Vagina (tissue), 2 donors: ENCODE measurements at regions of chr12 and their contacts with region 1.

Region 1: DNA sequence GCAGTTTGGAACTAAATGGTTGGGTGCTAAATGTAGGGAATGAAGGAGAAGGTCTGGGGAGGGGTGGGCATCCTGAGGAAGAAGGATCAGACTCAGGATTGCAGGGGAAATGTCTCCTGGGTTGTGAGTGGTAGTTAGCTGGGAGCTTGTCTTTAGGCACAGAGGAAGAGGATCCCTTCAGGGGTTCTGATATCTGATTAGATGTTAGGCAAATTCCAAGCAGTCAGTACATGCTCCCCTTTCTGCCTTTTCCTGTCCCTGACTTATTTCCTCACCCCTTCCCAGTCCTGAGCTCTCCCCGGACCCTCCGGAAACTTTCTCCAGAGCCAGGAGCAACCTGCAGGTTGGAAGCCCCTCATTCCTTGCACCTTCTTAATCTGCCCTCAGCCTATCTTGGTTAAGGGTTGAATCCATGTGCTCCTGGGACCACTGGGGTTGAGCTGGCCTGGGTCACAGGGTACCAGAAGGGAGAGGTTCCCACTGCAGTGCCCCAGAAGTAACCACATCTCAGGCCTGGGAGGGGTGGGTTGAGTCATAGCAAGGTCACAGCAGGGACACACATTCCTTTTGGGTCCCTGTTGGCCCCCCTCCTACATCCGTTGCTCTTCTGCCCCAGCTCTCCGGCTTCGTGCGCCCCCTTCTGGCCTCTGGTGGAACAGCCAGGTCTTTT is 1.6 kb downstream of the IGFBP6 start:
- DNase-seq: peak in 1 of 2 donors; percentile 96
- H3K4me3 ChIP-seq: peak overlapping the region; percentile 58 to 70
- H3K27ac ChIP-seq: peak overlapping the region; percentile 84
- H3K4me1 ChIP-seq: peaks cover 46% of the 10 kb centered on the region
- H3K27me3 ChIP-seq: no peaks in the 10 kb centered on the region
- CTCF ChIP-seq: peak; percentile 91 to 99 (median 99)
- POLR2A ChIP-seq: peak in 1 of 2 donors; percentile 37

Region 2: DNA sequence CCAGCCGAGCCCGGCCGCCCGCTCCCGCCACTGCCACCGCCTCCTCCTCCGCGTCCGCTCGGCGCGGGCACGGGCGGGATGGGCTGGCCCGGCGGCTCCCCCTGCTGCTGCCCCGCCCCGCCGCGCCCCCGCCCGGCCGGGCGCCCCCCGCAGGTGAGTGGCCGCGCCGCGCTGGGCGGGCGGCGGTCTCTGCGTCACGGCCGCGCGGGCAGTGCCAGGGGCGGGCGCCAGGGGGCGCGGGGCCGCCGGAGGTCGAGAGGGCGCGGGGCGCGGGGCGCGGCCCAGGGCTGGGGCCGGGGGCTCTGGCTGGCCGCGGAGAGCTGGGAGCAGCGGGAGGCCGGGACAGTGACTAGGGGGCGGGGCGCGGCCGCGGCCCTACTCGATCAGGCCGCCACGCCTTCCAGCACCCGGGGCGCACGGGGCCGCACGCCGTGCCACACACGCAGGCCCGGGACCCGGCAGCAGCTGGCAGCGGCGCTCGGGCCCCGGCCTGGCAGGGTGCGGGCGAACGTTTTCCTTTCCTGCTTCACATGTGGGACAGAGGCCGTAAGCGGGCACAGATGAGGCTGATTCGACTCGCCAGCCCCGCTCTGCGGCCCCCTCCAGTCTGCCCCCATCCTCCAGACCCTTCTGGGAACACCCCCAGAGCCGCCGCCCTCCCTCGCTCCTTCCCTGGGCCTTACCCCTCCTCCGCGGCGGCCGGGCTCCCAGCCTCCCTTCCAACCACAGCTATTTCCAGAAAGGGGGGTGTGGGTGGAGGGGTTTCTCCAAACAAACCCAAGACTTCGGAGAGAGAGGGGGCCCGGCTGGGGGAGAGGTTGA is 51.7 kb before region 1 on chr12:
- intact Hi-C with region 1: loop called (anchors 10 kb)
- DNase-seq: peak in 1 of 2 donors; percentile 93
- H3K4me3 ChIP-seq: peak overlapping the region; percentile 73 to 86
- H3K27ac ChIP-seq: peak overlapping the region; percentile 96
- H3K4me1 ChIP-seq: peaks cover 72% of the 10 kb centered on the region
- H3K27me3 ChIP-seq: no peaks in the 10 kb centered on the region
- CTCF ChIP-seq: no peak
- POLR2A ChIP-seq: peak in 1 of 2 donors; percentile 71

Region 3: DNA sequence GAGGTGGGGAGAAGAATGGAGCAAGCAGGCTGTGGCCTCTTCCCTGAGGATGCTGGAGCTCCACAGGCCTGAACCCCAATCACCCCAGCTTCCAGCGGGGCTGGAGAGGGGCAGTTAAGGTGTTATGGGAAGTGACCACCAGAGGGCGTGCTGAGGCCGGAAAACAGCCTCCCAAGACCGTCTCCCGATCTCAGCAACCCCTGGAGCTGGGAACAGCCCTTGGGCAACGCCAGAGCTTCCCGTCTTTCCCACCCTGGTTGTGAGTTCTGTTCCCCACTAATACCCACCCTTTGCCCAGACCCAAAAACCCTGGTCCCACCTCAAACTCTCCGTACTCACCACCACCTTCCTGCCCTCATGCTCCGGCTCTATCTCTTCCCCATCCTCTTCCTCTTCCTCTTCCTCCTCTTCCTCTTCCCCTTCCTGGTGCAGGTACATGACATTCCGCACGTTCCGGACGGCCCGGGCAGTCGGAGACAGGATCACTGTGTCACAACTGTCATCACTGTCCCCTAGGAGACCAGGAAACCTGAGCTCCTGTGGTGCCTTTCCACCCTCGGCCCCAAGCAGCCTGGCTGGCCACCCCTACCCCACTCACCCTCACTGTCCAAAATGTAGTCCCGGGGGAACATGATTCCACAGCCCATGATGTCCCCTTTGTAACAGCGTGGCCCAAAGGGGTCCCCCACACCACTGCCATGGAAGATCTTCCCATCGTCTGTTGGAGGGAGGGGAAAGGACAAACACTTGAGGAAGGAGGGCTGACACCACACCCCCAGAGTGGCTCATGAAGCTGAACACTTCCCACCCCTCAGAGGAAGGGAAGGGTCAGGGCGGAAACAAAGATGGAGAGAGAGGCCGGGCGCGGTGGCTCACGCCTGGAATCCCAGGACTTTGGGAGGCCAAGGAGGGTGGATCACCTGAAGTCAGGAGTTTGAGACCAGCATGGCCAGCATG is 32.9 kb before region 1 on chr12:
- intact Hi-C with region 1: loop called (anchors 1 kb)
- DNase-seq: peak in 1 of 2 donors; percentile 89
- H3K4me3 ChIP-seq: no peak overlapping the region
- H3K27ac ChIP-seq: peak overlapping the region; percentile 80
- H3K4me1 ChIP-seq: peaks cover 89% of the 10 kb centered on the region
- H3K27me3 ChIP-seq: no peaks in the 10 kb centered on the region
- CTCF ChIP-seq: peak; percentile 88 to 97 (median 95)
- POLR2A ChIP-seq: no peak